HepG2 (cell line): ENCODE measurements at regions of chr4 and their contacts with region 1.

Region 1: GRCh38 chr4:105520817-105521790 is 31.3 kb upstream of the ARHGEF38 start:
- DNase-seq: peak; percentile 35
- ATAC-seq: peak; percentile 85
- H3K4me3 ChIP-seq: no peak overlapping the region
- H3K27ac ChIP-seq: no peak overlapping the region
- H3K4me1 ChIP-seq: no peaks in the 10 kb centered on the region
- H3K27me3 ChIP-seq: no peaks in the 10 kb centered on the region; a peak in 1 of 5 replicates
- CTCF ChIP-seq: peak; percentile 73
- EP300 ChIP-seq: no peak
- POLR2A ChIP-seq: no peak
- RAD21 ChIP-seq: no peak

Region 2: GRCh38 chr4:105679186-105679585 is 158.1 kb after region 1 on chr4:
- CTCF ChIA-PET with region 1: no interaction called
- POLR2A ChIA-PET with region 1: no interaction called
- in situ Hi-C with region 1: no loop called
- intact Hi-C with region 1: loop called (anchors 10 kb)
- DNase-seq: no peak
- ATAC-seq: no peak
- H3K4me3 ChIP-seq: no peak overlapping the region
- H3K27ac ChIP-seq: no peak overlapping the region
- H3K4me1 ChIP-seq: no peaks in the 10 kb centered on the region
- H3K27me3 ChIP-seq: no peaks in the 10 kb centered on the region
- CTCF ChIP-seq: no peak
- EP300 ChIP-seq: no peak
- POLR2A ChIP-seq: no peak
- RAD21 ChIP-seq: no peak

Region 3: DNA sequence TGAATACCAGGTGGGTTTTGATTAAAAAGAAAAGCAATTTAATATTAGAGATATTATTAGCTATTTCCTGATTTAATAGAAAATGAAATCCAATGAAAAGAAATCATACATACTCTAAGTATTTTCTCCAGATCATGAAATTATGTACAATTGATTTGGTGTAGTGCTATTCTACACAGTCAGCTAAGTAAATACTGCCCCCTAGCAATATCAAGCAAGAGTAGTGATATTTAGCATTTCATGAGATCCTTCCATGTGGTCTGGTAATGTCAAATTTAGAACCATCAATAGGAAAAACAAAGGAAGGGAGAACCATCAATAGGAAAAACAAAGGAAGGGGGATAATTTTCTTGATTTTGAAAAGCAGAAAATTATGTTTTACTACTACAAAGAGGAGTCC is 680.3 kb after region 1 on chr4:
- CTCF ChIA-PET with region 1: no interaction called
- POLR2A ChIA-PET with region 1: no interaction called
- in situ Hi-C with region 1: no loop called
- intact Hi-C with region 1: loop called (anchors 10 kb)
- DNase-seq: peak; percentile 7
- ATAC-seq: peak; percentile 66; the same call in 2 of the 3 replicates
- H3K4me3 ChIP-seq: no peak overlapping the region
- H3K27ac ChIP-seq: no peak overlapping the region
- H3K4me1 ChIP-seq: no peaks in the 10 kb centered on the region
- H3K27me3 ChIP-seq: no peaks in the 10 kb centered on the region
- CTCF ChIP-seq: peak; percentile 56
- EP300 ChIP-seq: no peak
- POLR2A ChIP-seq: no peak
- RAD21 ChIP-seq: no peak

Region 4: GRCh38 chr4:106401162-106401561 is 880.1 kb after region 1 on chr4:
- CTCF ChIA-PET with region 1: no interaction called
- POLR2A ChIA-PET with region 1: no interaction called
- in situ Hi-C with region 1: no loop called
- intact Hi-C with region 1: no loop called
- DNase-seq: no peak
- ATAC-seq: no peak
- H3K4me3 ChIP-seq: no peak overlapping the region
- H3K27ac ChIP-seq: no peak overlapping the region
- H3K4me1 ChIP-seq: no peaks in the 10 kb centered on the region
- H3K27me3 ChIP-seq: no peaks in the 10 kb centered on the region
- CTCF ChIP-seq: no peak
- EP300 ChIP-seq: no peak
- POLR2A ChIP-seq: no peak
- RAD21 ChIP-seq: no peak